CD8-positive, alpha-beta memory T cell (primary cell): ENCODE measurements at regions of chr18 and their contacts with region 1.

Region 1: DNA sequence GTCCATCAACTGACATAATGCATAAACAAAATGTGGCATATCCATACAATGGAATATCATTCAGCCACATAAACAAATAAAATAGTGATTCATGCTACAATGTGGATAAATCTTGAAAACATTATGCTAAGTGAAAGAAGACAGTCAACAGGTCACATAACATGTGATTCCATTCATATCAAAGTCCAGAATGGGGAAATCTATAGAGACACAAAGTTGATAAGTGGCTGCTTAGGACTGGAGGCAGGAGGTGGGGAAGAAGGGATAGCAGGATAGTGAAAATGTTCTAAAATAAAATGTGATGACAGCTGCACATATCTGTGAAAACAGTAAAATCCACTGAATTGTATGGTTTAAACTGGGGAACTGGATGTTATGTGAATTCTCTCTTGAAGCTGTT is 18.7 kb downstream of the CFAP53 start:
- DNase-seq: no peak
- H3K4me3 ChIP-seq: no peak overlapping the region
- H3K4me3 Mint-ChIP-seq: no peak overlapping the region
- H3K27ac ChIP-seq: no peak overlapping the region
- H3K27ac Mint-ChIP-seq: no peak overlapping the region
- H3K4me1 ChIP-seq: no peaks in the 10 kb centered on the region
- H3K4me1 Mint-ChIP-seq: no peaks in the 10 kb centered on the region
- H3K27me3 ChIP-seq: no peaks in the 10 kb centered on the region
- H3K27me3 Mint-ChIP-seq: peaks cover 9 to 17% of the 10 kb centered on the region in 2 donors

Region 2: DNA sequence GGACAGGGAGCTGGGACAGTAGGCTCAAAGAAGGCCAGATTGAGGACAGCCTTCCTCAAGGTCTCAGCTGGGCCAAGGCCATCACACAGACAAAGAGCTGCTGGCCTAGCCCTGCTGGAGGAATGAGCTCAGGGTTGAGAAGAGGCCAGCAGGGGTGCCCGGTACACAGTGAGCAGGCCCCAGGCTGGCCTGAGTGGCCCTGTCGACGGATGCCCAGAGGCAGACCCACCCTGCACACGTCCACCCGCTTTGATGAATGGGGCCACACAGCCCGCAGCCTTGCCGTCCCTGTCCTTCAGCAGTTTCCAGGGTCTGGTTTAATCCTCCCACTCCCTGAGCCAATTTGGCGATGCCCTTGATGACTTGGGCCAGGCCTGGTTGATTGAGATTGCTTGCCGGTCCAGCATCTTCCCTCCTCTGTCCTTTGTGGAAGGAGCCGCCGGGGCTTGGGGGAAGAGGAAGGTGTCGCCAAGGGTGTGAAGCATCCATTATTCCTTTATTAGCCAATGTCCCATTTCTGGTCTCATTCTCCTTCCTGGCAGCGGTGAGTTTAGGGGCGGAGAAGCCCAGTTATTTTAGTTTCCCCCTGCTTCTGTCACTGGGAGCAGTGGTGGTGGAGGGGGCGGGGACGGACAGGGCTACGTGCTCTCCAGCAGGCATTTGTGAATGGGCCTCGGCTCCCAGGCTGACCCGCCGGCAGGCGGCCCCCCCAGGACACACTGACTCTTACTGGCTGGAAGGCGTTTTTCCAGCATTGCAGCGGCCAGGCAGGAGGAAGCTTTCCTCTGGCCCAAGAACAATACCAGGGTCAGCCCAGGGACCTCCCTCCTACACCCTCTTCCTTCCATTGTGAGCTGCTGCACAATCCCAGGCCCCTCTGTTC is 1567.0 kb before region 1 on chr18:
- CTCF ChIA-PET with region 1: no interaction called
- POLR2A ChIA-PET with region 1: interaction called, 13 read pairs
- DNase-seq: no peak
- H3K4me3 ChIP-seq: no peak overlapping the region
- H3K4me3 Mint-ChIP-seq: no peak overlapping the region
- H3K27ac ChIP-seq: no peak overlapping the region
- H3K27ac Mint-ChIP-seq: peak overlapping the region in 1 of 8 donors; percentile 60
- H3K4me1 ChIP-seq: no peaks in the 10 kb centered on the region
- H3K4me1 Mint-ChIP-seq: no peaks in the 10 kb centered on the region
- H3K27me3 ChIP-seq: no peaks in the 10 kb centered on the region
- H3K27me3 Mint-ChIP-seq: no peaks in the 10 kb centered on the region

Region 3: DNA sequence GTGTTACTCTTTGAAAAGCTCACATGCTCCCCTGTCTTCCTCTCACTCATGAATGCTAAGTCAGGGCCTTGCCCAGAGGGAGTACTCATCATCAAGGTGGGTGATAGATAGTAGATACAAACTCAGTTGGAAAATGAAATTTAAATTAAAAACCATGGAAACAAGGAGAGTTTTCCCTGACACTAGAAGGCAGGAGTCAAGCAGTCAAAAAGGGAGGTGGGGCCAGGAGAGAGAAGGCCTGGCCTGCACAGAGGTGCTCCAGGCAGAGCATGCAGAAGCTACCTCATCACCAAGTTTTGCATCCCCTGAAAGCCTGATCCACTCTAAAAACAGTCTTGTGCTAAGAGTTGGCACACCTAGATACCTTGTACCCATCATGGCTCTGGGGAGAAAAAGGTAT is 196.3 kb before region 1 on chr18:
- CTCF ChIA-PET with region 1: no interaction called
- POLR2A ChIA-PET with region 1: no interaction called
- DNase-seq: no peak
- H3K4me3 ChIP-seq: no peak overlapping the region
- H3K4me3 Mint-ChIP-seq: no peak overlapping the region
- H3K27ac ChIP-seq: no peak overlapping the region
- H3K27ac Mint-ChIP-seq: no peak overlapping the region
- H3K4me1 ChIP-seq: no peaks in the 10 kb centered on the region
- H3K4me1 Mint-ChIP-seq: no peaks in the 10 kb centered on the region
- H3K27me3 ChIP-seq: no peaks in the 10 kb centered on the region
- H3K27me3 Mint-ChIP-seq: peaks cover 1 to 3% of the 10 kb centered on the region in 2 donors